Mammary epithelial cell (primary cell): ENCODE measurements at regions of chr10 and their contacts with region 1.

Region 1: GRCh38 chr10:112852306-112852705 is 97.7 kb upstream of the TCF7L2 start:
- DNase-seq: no peak
- H3K4me3 ChIP-seq: no peak overlapping the region
- H3K27ac ChIP-seq: no peak overlapping the region
- H3K4me1 ChIP-seq: peaks cover 3% of the 10 kb centered on the region
- H3K27me3 ChIP-seq: peaks cover 3% of the 10 kb centered on the region
- CTCF ChIP-seq: no peak

Region 2: GRCh38 chr10:112775381-112775780 is 76.9 kb before region 1 on chr10:
- CTCF ChIA-PET with region 1: no interaction called
- dilution Hi-C with region 1: loop called (anchors 5 kb)
- in situ Hi-C with region 1: no loop called
- intact Hi-C with region 1: no loop called
- DNase-seq: no peak
- H3K4me3 ChIP-seq: no peak overlapping the region
- H3K27ac ChIP-seq: no peak overlapping the region
- H3K4me1 ChIP-seq: no peaks in the 10 kb centered on the region
- H3K27me3 ChIP-seq: no peaks in the 10 kb centered on the region
- CTCF ChIP-seq: no peak